ENCODE measurements at regions of chr21 and their contacts with region 1.

Region 1: DNA sequence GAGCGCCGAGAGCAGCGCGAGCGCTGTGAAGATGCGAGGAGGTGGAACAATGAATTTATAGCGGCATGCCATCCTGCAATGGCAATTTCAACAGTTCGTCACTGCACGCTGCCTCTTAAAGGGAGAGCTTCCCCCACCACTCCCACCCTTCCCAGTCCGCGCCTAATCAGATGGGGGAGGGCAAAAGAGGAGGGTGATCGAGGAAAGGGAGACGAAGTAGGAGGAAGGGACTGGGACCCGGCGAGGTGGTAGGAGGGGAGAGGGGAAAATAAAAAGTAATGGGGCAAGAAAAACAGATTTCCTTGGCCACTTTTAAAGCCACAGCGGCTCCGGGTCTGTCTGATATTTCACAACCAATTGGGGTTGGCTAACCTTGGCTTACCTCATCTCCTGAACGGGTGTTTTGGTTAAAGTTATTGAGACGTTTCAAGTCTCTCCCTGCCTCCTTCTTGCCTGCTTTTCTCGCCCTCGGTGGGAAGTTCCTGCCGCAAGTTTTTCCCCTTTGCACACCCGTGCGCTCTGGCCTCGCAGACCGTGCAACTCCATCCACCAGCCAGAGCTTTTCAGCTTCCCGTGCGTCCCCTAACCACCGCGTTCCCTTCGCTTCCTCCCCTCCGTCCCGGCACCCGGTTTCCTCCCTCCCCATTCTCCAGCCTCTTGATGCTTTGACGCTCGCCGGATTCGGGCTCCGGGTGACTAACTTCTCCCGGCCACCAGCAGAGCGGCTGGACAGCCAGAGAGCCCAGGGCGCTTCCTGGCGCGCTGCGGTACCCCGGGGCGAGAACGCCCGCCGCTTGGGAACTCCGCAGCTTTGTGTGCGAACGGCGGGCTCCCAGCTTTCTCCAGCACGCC is at the start of gene ADAMTS5:
- DNase-seq: peak; percentile 69
- ATAC-seq: peak; percentile 61
- H3K4me3 ChIP-seq: peak within 1 kb of the TSS; percentile 65
- H3K27ac ChIP-seq: peak within 1 kb of the TSS; percentile 80
- H3K4me1 ChIP-seq: no peaks in the 10 kb centered on the region; the same call in 1 of the 2 replicates
- H3K27me3 ChIP-seq: no peaks in the 10 kb centered on the region
- CTCF ChIP-seq: 0 out of 2 replicates have a peak, but pooled peaks have one; percentile 4
- POLR2A ChIP-seq: peak; percentile 65
- RAD21 ChIP-seq: no peak; the same call in 1 of the 2 replicates
- total RNA-seq, gene ADAMTS5: 0.54 and 1.1 TPM in 2 replicates

Region 2: GRCh38 chr21:26810676-26811415 is 156.4 kb before region 1 on chr21:
- CTCF ChIA-PET with region 1: no interaction called
- POLR2A ChIA-PET with region 1: no interaction called
- dilution Hi-C with region 1: no loop called
- in situ Hi-C with region 1: no loop called
- intact Hi-C with region 1: no loop called
- DNase-seq: peak; percentile 82
- ATAC-seq: peak; percentile 55
- H3K4me3 ChIP-seq: no peak overlapping the region
- H3K27ac ChIP-seq: no peak overlapping the region
- H3K4me1 ChIP-seq: peaks cover 6% of the 10 kb centered on the region
- H3K27me3 ChIP-seq: no peaks in the 10 kb centered on the region
- CTCF ChIP-seq: no peak
- POLR2A ChIP-seq: no peak
- RAD21 ChIP-seq: no peak

Region 3: GRCh38 chr21:26850108-26850643 is 117.1 kb before region 1 on chr21:
- CTCF ChIA-PET with region 1: no interaction called
- POLR2A ChIA-PET with region 1: no interaction called
- dilution Hi-C with region 1: no loop called
- in situ Hi-C with region 1: no loop called
- intact Hi-C with region 1: loop called (anchors 2 kb)
- DNase-seq: peak; percentile 59
- ATAC-seq: no peak
- H3K4me3 ChIP-seq: no peak overlapping the region
- H3K27ac ChIP-seq: peak overlapping the region; percentile 33; the same call in 1 of the 2 replicates
- H3K4me1 ChIP-seq: peaks cover 8% of the 10 kb centered on the region
- H3K27me3 ChIP-seq: no peaks in the 10 kb centered on the region
- CTCF ChIP-seq: peak; percentile 58
- POLR2A ChIP-seq: no peak; the same call in 1 of the 2 replicates
- RAD21 ChIP-seq: peak; percentile 72

Region 4: DNA sequence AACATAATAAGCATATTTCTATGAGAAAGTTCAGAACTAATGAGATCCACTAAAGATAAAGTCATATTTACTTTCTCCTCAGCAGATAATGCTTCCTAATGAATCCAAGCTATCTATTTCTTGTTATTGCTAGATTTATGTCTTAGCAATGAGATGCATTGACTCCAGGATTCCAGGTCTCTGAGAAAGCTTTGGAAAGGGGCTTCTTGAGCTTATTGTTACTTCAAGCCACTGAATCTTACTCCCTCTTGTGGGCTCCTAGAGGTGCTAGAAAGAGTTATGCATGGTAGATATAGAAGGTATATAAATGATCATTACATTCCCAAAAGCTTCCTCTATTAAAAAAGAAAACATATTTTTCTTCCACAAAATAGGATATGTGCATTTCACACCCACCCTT is 246.0 kb after region 1 on chr21:
- CTCF ChIA-PET with region 1: no interaction called
- POLR2A ChIA-PET with region 1: no interaction called
- dilution Hi-C with region 1: no loop called
- in situ Hi-C with region 1: no loop called
- intact Hi-C with region 1: loop called (anchors 5 kb)
- DNase-seq: peak; percentile 36
- ATAC-seq: no peak
- H3K4me3 ChIP-seq: no peak overlapping the region
- H3K27ac ChIP-seq: no peak overlapping the region
- H3K4me1 ChIP-seq: no peaks in the 10 kb centered on the region
- H3K27me3 ChIP-seq: no peaks in the 10 kb centered on the region
- CTCF ChIP-seq: peak; percentile 40
- POLR2A ChIP-seq: no peak
- RAD21 ChIP-seq: peak; percentile 46

Region 5: DNA sequence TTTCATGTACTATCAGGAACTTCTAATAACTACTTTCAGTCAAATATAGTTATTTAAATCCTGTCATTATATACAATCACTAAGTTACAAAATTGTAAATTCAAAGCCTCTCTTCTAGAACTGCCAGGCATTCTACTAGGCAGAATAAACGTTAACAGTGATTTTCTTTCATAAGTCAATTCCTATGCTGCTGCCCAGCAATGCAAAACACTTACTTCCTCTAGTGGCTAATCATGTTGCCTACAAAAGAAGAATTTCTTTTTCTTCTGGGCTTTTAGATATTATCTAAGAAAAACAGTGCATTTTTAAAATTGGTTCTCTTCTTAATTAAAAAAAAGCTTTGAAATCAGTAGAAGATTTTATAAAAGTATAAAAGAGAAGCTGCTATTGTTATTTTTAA is 509.4 kb after region 1 on chr21:
- CTCF ChIA-PET with region 1: no interaction called
- POLR2A ChIA-PET with region 1: no interaction called
- dilution Hi-C with region 1: no loop called
- in situ Hi-C with region 1: no loop called
- intact Hi-C with region 1: loop called (anchors 5 kb)
- DNase-seq: peak; percentile 62
- ATAC-seq: peak; percentile 83
- H3K4me3 ChIP-seq: no peak overlapping the region
- H3K27ac ChIP-seq: no peak overlapping the region
- H3K4me1 ChIP-seq: peaks cover 6% of the 10 kb centered on the region
- H3K27me3 ChIP-seq: no peaks in the 10 kb centered on the region
- CTCF ChIP-seq: peak; percentile 61
- POLR2A ChIP-seq: no peak
- RAD21 ChIP-seq: peak; percentile 74

Region 6: DNA sequence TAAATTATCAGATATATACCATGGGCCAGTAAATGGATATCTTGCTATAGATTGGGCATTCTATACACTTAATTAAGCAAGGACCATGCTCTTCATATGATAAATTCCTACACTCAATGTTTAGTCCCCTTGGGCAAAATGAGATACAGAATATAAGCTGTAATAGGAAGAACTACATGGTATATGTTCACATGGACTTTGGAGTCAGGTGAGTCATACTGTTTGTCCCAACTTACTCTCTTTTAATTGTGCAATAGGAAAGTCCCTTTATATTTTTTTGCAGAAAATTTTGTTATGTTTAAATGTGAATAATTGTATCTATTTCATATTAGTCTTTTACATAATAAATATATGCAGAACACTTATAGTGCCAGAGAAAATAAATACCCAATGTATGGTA is 819.8 kb after region 1 on chr21:
- CTCF ChIA-PET with region 1: no interaction called
- POLR2A ChIA-PET with region 1: interaction called, 21 read pairs
- dilution Hi-C with region 1: no loop called
- in situ Hi-C with region 1: no loop called
- intact Hi-C with region 1: no loop called
- DNase-seq: peak; percentile 19
- ATAC-seq: no peak
- H3K4me3 ChIP-seq: no peak overlapping the region
- H3K27ac ChIP-seq: no peak overlapping the region
- H3K4me1 ChIP-seq: no peaks in the 10 kb centered on the region
- H3K27me3 ChIP-seq: no peaks in the 10 kb centered on the region
- CTCF ChIP-seq: no peak
- POLR2A ChIP-seq: no peak
- RAD21 ChIP-seq: no peak